Heart left ventricle (tissue), 16 donors: ENCODE measurements at regions of chr6 and their contacts with region 1.

Region 1: DNA sequence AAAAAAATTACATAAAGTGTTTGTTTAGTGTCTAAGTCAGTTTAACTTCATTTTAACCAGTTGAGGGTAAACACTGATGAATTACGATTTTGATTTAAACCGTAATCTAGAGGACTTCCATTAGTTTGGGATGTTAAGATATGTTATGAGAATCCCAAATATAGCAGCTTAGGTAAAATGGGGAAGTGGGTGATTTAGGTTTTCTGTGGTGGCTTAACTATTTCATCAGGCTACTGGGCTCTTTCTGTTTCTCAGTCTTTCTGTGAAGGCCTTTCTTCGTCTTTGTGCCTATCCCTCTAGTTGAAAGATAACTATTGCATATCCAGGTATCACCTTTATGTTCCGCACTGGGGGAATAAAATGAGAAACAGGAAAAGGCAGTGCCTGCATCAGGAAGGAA is 27.9 kb downstream of the CENPW start:
- DNase-seq: no peak
- ATAC-seq: no peak
- H3K4me3 ChIP-seq: no peak overlapping the region
- H3K27ac ChIP-seq: no peak overlapping the region
- H3K4me1 ChIP-seq: no peaks in the 10 kb centered on the region
- H3K27me3 ChIP-seq: no peaks in the 10 kb centered on the region
- CTCF ChIP-seq: no peak
- POLR2A ChIP-seq: no peak

Region 2: DNA sequence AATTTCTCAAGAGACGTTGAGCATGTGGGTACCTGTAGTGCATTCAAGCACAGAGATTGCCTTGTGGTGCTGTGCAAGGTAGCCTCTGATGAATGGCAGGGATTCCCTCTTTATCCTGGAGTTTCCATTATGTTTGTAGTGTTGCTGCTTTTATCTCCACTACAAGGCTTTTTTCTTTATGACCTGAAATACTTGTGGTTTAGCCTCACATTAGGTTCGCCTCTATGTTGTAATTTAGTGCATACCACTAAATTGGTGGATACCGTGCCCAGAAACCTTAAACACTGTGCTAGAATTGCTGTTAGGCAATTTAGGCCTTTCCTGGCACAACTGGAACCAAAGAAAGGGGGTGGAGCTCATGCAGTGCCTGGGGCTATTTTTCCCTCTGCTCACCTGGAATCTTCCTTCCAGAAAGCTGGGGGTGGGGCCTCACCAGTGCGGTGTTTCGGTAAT is 500.3 kb before region 1 on chr6:
- intact Hi-C with region 1: no loop called
- DNase-seq: no peak
- ATAC-seq: no peak
- H3K4me3 ChIP-seq: no peak overlapping the region
- H3K27ac ChIP-seq: no peak overlapping the region
- H3K4me1 ChIP-seq: peaks cover 0 to 15% (median 5%) of the 10 kb centered on the region in 12 donors
- H3K27me3 ChIP-seq: no peaks in the 10 kb centered on the region
- CTCF ChIP-seq: no peak
- POLR2A ChIP-seq: no peak

Region 3: DNA sequence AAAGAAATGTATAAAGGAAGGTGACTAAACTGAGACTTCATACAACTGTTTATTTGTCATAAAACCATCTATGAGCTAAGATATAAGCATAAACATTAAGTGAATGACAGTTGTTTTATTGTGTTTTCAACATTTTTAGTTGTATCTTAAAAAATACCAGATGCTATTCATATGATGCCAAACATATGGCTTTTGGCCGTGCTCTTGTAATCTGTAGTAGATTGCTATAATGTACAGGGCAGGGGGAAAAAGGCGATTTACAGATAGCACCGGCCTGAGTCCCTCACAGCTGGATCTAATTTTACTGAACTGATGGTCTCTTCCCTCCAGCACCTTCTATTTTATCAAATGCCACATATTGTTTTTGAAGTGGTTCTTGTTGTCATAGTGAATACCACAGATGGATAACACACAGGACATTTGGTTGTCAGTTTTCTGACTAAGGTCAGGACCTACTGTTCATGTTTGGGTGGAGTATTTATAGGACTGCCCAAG is 20.3 kb after region 1 on chr6:
- intact Hi-C with region 1: loop called in 1 of 10 experiments (anchors 2 kb)
- DNase-seq: no peak
- ATAC-seq: no peak
- H3K4me3 ChIP-seq: no peak overlapping the region
- H3K27ac ChIP-seq: no peak overlapping the region
- H3K4me1 ChIP-seq: no peaks in the 10 kb centered on the region
- H3K27me3 ChIP-seq: no peaks in the 10 kb centered on the region
- CTCF ChIP-seq: no peak
- POLR2A ChIP-seq: no peak